Activated naive CD8-positive, alpha-beta T cell treated with anti-CD3 and anti-CD28 coated beads, Interleukin-2, amount 10 ng/mL, durations not matched to agents 7 days and 5 days (primary cell): ENCODE measurements at regions of chr2 and their contacts with region 1.

Region 1: GRCh38 chr2:195533771-195534642 is 123.0 kb upstream of the SLC39A10 start:
- DNase-seq: peak; percentile 57
- ATAC-seq: peak; percentile 57
- H3K4me3 Mint-ChIP-seq: peak overlapping the region; percentile 85
- H3K27ac Mint-ChIP-seq: peak overlapping the region; percentile 95
- H3K4me1 Mint-ChIP-seq: peaks cover 72% of the 10 kb centered on the region
- H3K27me3 Mint-ChIP-seq: no peaks in the 10 kb centered on the region

Region 2: DNA sequence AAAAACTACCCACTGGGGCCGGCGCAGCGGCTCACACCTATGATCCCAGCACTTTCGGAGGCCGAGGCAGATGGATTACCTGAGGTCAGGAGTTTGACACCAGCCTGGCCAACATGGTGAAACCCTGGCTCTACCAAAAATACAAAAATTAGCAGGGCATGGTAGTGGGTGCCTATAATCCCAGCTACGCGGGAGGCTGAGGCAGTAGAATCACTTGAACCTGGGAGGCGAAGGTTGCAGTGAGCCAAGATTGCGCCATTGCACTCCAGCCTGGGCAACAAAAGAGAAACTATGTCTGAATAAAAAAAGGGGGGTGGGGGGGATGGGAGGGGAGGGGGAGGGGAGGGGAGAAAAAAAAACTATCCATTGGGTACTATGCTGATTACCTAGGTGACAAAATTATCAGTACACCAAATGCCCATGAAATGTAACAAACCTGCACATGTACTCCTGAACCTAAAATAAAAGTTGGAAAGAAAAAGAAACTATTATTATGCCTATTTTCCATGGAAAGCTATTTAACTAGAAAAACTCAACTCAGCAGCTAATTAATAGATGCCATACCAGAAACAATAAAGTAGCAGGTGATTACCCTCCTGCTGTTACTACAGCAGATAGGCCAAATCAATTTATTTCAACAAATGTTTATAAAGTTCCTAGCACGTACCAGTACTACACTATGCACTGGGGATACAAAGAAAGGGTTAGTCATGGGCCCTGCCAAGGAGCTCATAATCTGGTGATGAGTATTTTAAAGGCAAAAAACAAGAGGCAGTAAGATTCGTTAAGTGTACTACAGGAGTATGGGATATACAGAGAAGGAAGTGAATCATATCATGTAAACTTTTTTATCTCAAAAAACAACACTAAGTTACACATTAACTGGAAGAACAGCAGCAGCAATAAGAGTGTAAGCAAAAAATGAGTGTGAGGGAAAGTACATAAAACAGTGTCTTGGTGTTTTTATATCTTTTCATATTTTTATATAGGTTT is 10.2 kb after region 1 on chr2:
- POLR2A ChIA-PET with region 1: interaction called, 53 read pairs
- DNase-seq: no peak
- ATAC-seq: peak; percentile 10
- H3K4me3 Mint-ChIP-seq: peak overlapping the region; percentile 42
- H3K27ac Mint-ChIP-seq: peak overlapping the region; percentile 80
- H3K4me1 Mint-ChIP-seq: peaks cover 37% of the 10 kb centered on the region
- H3K27me3 Mint-ChIP-seq: no peaks in the 10 kb centered on the region

Region 3: GRCh38 chr2:195559431-195559914 is 25.5 kb after region 1 on chr2:
- POLR2A ChIA-PET with region 1: interaction called, 179 read pairs
- DNase-seq: peak; percentile 55
- ATAC-seq: peak; percentile 95
- H3K4me3 Mint-ChIP-seq: peak overlapping the region; percentile 60
- H3K27ac Mint-ChIP-seq: peak overlapping the region; percentile 85
- H3K4me1 Mint-ChIP-seq: peaks cover 59% of the 10 kb centered on the region
- H3K27me3 Mint-ChIP-seq: no peaks in the 10 kb centered on the region

Region 4: GRCh38 chr2:195575879-195576401 is 41.9 kb after region 1 on chr2:
- POLR2A ChIA-PET with region 1: interaction called, 19 read pairs
- DNase-seq: no peak
- ATAC-seq: peak; percentile 73
- H3K4me3 Mint-ChIP-seq: peak overlapping the region; percentile 63
- H3K27ac Mint-ChIP-seq: peak overlapping the region; percentile 84
- H3K4me1 Mint-ChIP-seq: peaks cover 50% of the 10 kb centered on the region
- H3K27me3 Mint-ChIP-seq: no peaks in the 10 kb centered on the region